ENCODE measurements at regions of chr2 and their contacts with region 1.

Region 1: GRCh38 chr2:68467077-68467960 is at the starts of genes APLF and FBXO48:
- DNase-seq: peak; percentile 94 to 100 (median 98)
- ATAC-seq: peak; percentile 91 to 94 (median 93)
- H3K4me3 ChIP-seq: peak within 1 kb of the TSS; percentile 96 to 97
- H3K4me3 Mint-ChIP-seq: peak within 1 kb of the TSS; percentile 96 to 98 (median 96)
- H3K27ac ChIP-seq: peak within 1 kb of the TSS; percentile 90
- H3K27ac Mint-ChIP-seq: peak within 1 kb of the TSS; percentile 94 to 95
- H3K4me1 ChIP-seq: peaks cover 17 to 23% of the 10 kb centered on the region in 2 experiments
- H3K4me1 Mint-ChIP-seq: peaks cover 37 to 53% (median 46%) of the 10 kb centered on the region in 3 donors
- H3K27me3 ChIP-seq: no peaks in the 10 kb centered on the region
- H3K27me3 Mint-ChIP-seq: no peaks in the 10 kb centered on the region
- total RNA-seq, gene APLF: 4.3 to 6.1 (median 5.1) TPM
- total RNA-seq, gene FBXO48: 1.8 to 4.5 (median 4.5) TPM

Region 2: DNA sequence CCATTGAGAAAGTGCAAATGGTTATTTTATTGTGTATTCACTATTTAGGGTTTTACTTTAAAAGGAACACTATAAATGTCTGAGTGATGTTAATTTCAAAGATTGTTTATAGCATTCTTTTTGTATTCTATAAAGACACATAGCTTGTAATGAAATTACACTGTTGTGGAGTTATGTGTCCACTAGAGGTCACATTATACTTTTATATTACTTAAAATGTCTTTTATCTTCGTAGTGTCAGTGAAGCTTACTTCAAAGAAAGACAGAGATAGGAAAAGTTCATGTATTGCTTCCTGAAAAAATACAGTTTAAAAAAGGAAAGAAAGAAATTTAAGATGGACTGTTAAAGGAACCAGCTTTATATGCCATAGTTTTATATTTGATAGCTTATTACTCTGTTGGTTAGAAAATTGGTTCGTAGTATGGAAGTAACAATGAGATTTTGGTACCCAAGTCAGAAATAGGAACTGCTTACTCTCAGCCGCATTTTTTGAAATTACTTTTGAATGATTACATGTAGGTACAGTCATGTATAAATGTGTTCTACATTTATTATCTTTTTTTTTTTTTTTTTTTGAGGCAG is 20.5 kb after region 1 on chr2:
- CTCF ChIA-PET with region 1: interaction called, 4 to 19 read pairs
- POLR2A ChIA-PET with region 1: interaction called in 1 of 2 experiments, 4 read pairs
- DNase-seq: peak in 1 of 35 experiments; percentile 52
- ATAC-seq: peak in 1 of 4 experiments; percentile 54
- H3K4me3 ChIP-seq: no peak overlapping the region
- H3K4me3 Mint-ChIP-seq: no peak overlapping the region
- H3K27ac ChIP-seq: no peak overlapping the region
- H3K27ac Mint-ChIP-seq: peak overlapping the region in 1 of 2 donors; percentile 46
- H3K4me1 ChIP-seq: no peaks in the 10 kb centered on the region
- H3K4me1 Mint-ChIP-seq: peaks cover 4 to 6% (median 5%) of the 10 kb centered on the region in 3 donors
- H3K27me3 ChIP-seq: no peaks in the 10 kb centered on the region
- H3K27me3 Mint-ChIP-seq: no peaks in the 10 kb centered on the region

Region 3: GRCh38 chr2:68709421-68709911 is 242.1 kb after region 1 on chr2:
- CTCF ChIA-PET with region 1: interaction called, 3 to 17 read pairs
- POLR2A ChIA-PET with region 1: interaction called in 1 of 2 experiments, 4 read pairs
- DNase-seq: peak in 1 of 35 experiments; percentile 59
- ATAC-seq: peak; percentile 50 to 80 (median 68)
- H3K4me3 ChIP-seq: no peak overlapping the region
- H3K4me3 Mint-ChIP-seq: no peak overlapping the region
- H3K27ac ChIP-seq: no peak overlapping the region
- H3K27ac Mint-ChIP-seq: peak overlapping the region; percentile 6 to 42
- H3K4me1 ChIP-seq: peaks cover 3 to 5% of the 10 kb centered on the region in 2 experiments
- H3K4me1 Mint-ChIP-seq: peaks cover 16 to 33% (median 19%) of the 10 kb centered on the region in 3 donors
- H3K27me3 ChIP-seq: no peaks in the 10 kb centered on the region
- H3K27me3 Mint-ChIP-seq: no peaks in the 10 kb centered on the region

Region 4: DNA sequence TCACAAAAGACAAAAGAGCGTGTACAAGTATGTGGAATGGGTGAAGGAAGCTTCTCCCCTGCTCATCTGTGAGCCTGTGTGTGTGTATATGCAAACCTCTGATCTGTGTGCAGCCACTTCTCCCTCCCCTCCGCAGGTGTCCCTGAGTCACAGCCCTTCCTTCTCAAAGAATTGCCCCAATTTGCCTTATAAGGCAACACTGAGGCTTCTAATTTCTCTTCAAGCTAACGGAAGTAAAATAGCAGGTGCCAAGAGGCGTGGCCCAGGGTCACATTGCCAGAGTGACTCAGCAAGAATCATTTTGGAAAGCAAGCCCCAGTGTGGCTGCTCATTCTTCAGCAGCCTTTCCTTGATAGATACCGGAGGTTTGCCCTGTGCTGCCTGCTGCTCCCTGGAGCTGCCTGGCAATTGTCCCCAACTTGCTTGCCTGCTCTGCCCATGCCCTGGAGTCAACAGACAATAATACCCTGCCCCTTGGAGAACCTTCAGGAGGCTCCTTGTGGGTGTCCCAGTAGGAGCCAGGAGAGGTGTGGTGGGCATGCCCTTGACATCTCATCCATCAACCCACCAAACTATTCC is 441.2 kb after region 1 on chr2:
- CTCF ChIA-PET with region 1: interaction called in 1 of 2 experiments, 16 read pairs
- POLR2A ChIA-PET with region 1: interaction called in 1 of 2 experiments, 3 read pairs
- DNase-seq: peak; percentile 68 to 91 (median 82)
- ATAC-seq: peak; percentile 96 to 98 (median 97)
- H3K4me3 ChIP-seq: no peak overlapping the region
- H3K4me3 Mint-ChIP-seq: peak overlapping the region in 2 of 3 donors; percentile 11 to 63
- H3K27ac ChIP-seq: peak overlapping the region; percentile 79
- H3K27ac Mint-ChIP-seq: peak overlapping the region; percentile 94 to 95
- H3K4me1 ChIP-seq: peaks cover 27 to 49% of the 10 kb centered on the region in 2 experiments
- H3K4me1 Mint-ChIP-seq: peaks cover 33 to 41% (median 36%) of the 10 kb centered on the region in 3 donors
- H3K27me3 ChIP-seq: no peaks in the 10 kb centered on the region
- H3K27me3 Mint-ChIP-seq: no peaks in the 10 kb centered on the region